ENCODE measurements at regions of chr4 and their contacts with region 1.

Region 1: GRCh38 chr4:33411182-33411581 is 2691.0 kb downstream of the PCDH7 start:
- DNase-seq: no peak
- H3K4me3 ChIP-seq: no peak overlapping the region
- H3K27ac ChIP-seq: no peak overlapping the region
- H3K4me1 ChIP-seq: no peaks in the 10 kb centered on the region
- H3K27me3 ChIP-seq: no peaks in the 10 kb centered on the region
- CTCF ChIP-seq: no peak

Region 2: GRCh38 chr4:33422656-33423055 is 11.5 kb after region 1 on chr4:
- CTCF ChIA-PET with region 1: no interaction called
- POLR2A ChIA-PET with region 1: no interaction called
- intact Hi-C with region 1: no loop called
- DNase-seq: no peak
- H3K4me3 ChIP-seq: no peak overlapping the region
- H3K27ac ChIP-seq: no peak overlapping the region
- H3K4me1 ChIP-seq: no peaks in the 10 kb centered on the region
- H3K27me3 ChIP-seq: no peaks in the 10 kb centered on the region
- CTCF ChIP-seq: no peak

Region 3: GRCh38 chr4:33954759-33955158 is 543.6 kb after region 1 on chr4:
- CTCF ChIA-PET with region 1: no interaction called
- POLR2A ChIA-PET with region 1: interaction called, 17 read pairs
- intact Hi-C with region 1: no loop called
- DNase-seq: no peak
- H3K4me3 ChIP-seq: no peak overlapping the region
- H3K27ac ChIP-seq: no peak overlapping the region
- H3K4me1 ChIP-seq: no peaks in the 10 kb centered on the region
- H3K27me3 ChIP-seq: no peaks in the 10 kb centered on the region
- CTCF ChIP-seq: no peak

Measured in PC-9 (cell line).